HCT116 (cell line): ENCODE measurements at regions of chr1 and their contacts with region 1.

Region 1: GRCh38 chr1:50873458-50874187 is 86.4 kb downstream of the FAF1 start:
- DNase-seq: peak; percentile 68
- ATAC-seq: peak; percentile 91
- H3K4me3 ChIP-seq: no peak overlapping the region; a peak in 1 of 4 replicates
- H3K27ac ChIP-seq: peak overlapping the region; percentile 5; the same call in 1 of the 2 replicates
- H3K4me1 ChIP-seq: peaks cover 3 to 13% of the 10 kb centered on the region in 2 experiments; a peak in 3 of 4 replicates
- H3K27me3 ChIP-seq: no peaks in the 10 kb centered on the region
- CTCF ChIP-seq: peak; percentile 80 to 99 (median 99)
- POLR2A ChIP-seq: no peak
- RAD21 ChIP-seq: peak; percentile 82

Region 2: DNA sequence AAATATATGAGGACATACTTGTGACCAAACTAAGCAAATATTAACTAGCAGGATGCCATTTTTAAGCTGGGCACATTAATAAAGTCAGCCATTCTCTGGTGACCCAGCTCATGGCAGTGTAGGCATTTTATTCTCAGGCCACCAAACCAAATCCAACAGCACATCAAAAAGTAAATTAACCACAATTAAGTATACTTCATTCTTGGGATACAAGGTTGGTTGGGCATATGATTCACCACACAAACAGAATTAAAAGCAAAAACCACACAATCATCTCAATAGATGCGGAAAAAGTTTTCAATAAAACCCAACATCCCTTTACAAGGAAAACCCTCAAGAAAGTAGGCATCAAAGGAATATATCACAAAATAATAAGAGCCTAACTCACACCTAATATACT is 14.9 kb before region 1 on chr1:
- CTCF ChIA-PET with region 1: interaction called, 18 read pairs
- POLR2A ChIA-PET with region 1: no interaction called
- RAD21 ChIA-PET with region 1: no interaction called
- intact Hi-C with region 1: no loop called
- DNase-seq: no peak
- ATAC-seq: no peak
- H3K4me3 ChIP-seq: no peak overlapping the region
- H3K27ac ChIP-seq: no peak overlapping the region
- H3K4me1 ChIP-seq: no peaks in the 10 kb centered on the region
- H3K27me3 ChIP-seq: no peaks in the 10 kb centered on the region
- CTCF ChIP-seq: no peak
- POLR2A ChIP-seq: no peak
- RAD21 ChIP-seq: no peak

Region 3: GRCh38 chr1:50917138-50918137 is 43.8 kb after region 1 on chr1:
- CTCF ChIA-PET with region 1: no interaction called
- POLR2A ChIA-PET with region 1: no interaction called
- RAD21 ChIA-PET with region 1: no interaction called
- intact Hi-C with region 1: no loop called
- DNase-seq: no peak
- ATAC-seq: no peak
- H3K4me3 ChIP-seq: no peak overlapping the region
- H3K27ac ChIP-seq: no peak overlapping the region
- H3K4me1 ChIP-seq: no peaks in the 10 kb centered on the region
- H3K27me3 ChIP-seq: no peaks in the 10 kb centered on the region
- CTCF ChIP-seq: no peak
- POLR2A ChIP-seq: no peak
- RAD21 ChIP-seq: no peak

Region 4: DNA sequence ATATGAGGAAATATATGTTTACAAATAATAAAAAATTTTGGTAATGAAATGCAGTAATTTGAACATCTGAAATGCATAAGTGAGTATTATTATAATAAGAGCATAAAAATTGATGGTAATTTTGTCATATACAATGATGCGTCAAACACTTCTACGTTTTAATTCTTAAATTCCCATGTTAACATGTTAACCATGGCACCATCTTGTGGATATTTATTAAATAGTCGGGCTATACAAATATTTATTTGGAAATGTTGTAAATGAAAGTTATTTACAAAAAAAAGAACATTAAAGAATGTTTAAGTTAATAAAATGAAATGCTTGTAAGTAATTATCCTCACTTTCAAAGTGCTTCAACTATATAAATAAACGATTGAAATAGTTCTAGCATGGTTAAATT is 171.2 kb after region 1 on chr1:
- CTCF ChIA-PET with region 1: interaction called, 8 read pairs
- POLR2A ChIA-PET with region 1: no interaction called
- RAD21 ChIA-PET with region 1: no interaction called
- intact Hi-C with region 1: loop called (anchors 1 kb)
- DNase-seq: no peak
- ATAC-seq: no peak
- H3K4me3 ChIP-seq: no peak overlapping the region
- H3K27ac ChIP-seq: no peak overlapping the region
- H3K4me1 ChIP-seq: no peaks in the 10 kb centered on the region
- H3K27me3 ChIP-seq: no peaks in the 10 kb centered on the region
- CTCF ChIP-seq: peak in 2 of 3 experiments; percentile 47 to 75; a peak in 2 of 6 replicates
- POLR2A ChIP-seq: no peak
- RAD21 ChIP-seq: peak; percentile 69

Region 5: GRCh38 chr1:51175278-51175677 is 301.7 kb after region 1 on chr1:
- CTCF ChIA-PET with region 1: no interaction called
- POLR2A ChIA-PET with region 1: no interaction called
- RAD21 ChIA-PET with region 1: no interaction called
- intact Hi-C with region 1: no loop called
- DNase-seq: no peak
- ATAC-seq: no peak
- H3K4me3 ChIP-seq: no peak overlapping the region
- H3K27ac ChIP-seq: no peak overlapping the region
- H3K4me1 ChIP-seq: no peaks in the 10 kb centered on the region
- H3K27me3 ChIP-seq: no peaks in the 10 kb centered on the region
- CTCF ChIP-seq: no peak
- POLR2A ChIP-seq: no peak
- RAD21 ChIP-seq: no peak

Region 6: GRCh38 chr1:51270751-51271150 is 397.1 kb after region 1 on chr1:
- CTCF ChIA-PET with region 1: no interaction called
- POLR2A ChIA-PET with region 1: no interaction called
- RAD21 ChIA-PET with region 1: no interaction called
- intact Hi-C with region 1: loop called (anchors 10 kb)
- DNase-seq: no peak
- ATAC-seq: no peak
- H3K4me3 ChIP-seq: no peak overlapping the region
- H3K27ac ChIP-seq: no peak overlapping the region
- H3K4me1 ChIP-seq: peaks cover 8 to 22% of the 10 kb centered on the region in 2 experiments
- H3K27me3 ChIP-seq: no peaks in the 10 kb centered on the region
- CTCF ChIP-seq: no peak
- POLR2A ChIP-seq: no peak
- RAD21 ChIP-seq: no peak